ENCODE measurements at regions of chr12 and their contacts with region 1.

Region 1: GRCh38 chr12:108950991-108951739 is 69.7 kb downstream of the SVOP start:
- DNase-seq: peak; percentile 76
- H3K4me3 ChIP-seq: no peak overlapping the region
- H3K27ac ChIP-seq: no peak overlapping the region
- H3K4me1 ChIP-seq: no peaks in the 10 kb centered on the region
- H3K27me3 ChIP-seq: no peaks in the 10 kb centered on the region
- CTCF ChIP-seq: peak; percentile 91

Region 2: DNA sequence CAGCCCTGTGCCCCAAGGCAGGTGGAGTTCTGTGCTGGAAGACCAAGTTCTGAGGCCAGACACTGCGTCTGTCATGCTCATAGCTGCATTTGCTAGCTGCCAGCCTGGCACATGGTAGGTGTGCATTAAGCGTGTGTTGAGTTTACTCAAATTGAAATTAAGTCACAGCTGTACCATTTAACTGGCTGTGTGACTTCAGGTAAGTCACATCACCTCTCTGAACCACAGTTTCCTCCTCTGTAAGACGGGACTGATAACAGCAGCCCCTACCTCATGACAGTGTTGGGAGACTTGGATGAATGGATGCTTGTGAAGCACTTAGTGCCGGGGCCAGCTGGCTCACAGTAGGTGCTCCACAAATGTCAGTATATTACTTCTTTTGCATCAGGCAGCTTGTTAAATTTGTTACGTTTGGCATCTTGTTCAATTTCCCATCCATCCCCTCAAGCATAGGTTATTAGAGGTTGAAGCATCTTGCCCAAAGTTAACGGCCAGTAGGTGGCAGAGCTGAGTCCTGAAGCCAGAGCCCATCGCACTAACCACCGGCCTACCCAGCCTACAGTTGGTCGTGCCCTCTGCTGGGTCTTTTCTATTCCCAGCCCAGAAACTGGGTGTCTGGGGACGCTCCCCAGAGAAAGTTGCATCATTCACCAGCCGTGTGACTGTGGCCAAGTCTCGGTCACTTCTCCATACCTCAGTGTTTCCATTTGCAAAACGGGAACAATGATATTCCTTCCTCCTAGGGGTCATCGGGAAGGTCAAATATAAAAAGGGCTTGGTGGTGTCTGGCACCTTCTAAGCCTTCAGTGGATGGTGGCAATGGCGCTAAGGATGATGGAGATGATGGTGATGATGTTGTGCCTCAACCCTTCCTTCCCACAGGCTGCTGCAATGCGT is 66.8 kb before region 1 on chr12:
- intact Hi-C with region 1: loop called (anchors 2 kb)
- DNase-seq: peak; percentile 66
- H3K4me3 ChIP-seq: no peak overlapping the region
- H3K27ac ChIP-seq: no peak overlapping the region
- H3K4me1 ChIP-seq: no peaks in the 10 kb centered on the region
- H3K27me3 ChIP-seq: no peaks in the 10 kb centered on the region
- CTCF ChIP-seq: peak; percentile 70